ENCODE measurements at regions of chr3 and their contacts with region 1.

Region 1: GRCh38 chr3:167380004-167380689 is at the start of gene ZBBX:
- DNase-seq: peak; percentile 86
- H3K4me3 Mint-ChIP-seq: peak within 1 kb of the TSS; percentile 60
- H3K27ac Mint-ChIP-seq: no peak within 1 kb of the TSS
- H3K4me1 Mint-ChIP-seq: peaks cover 9% of the 10 kb centered on the region
- H3K27me3 Mint-ChIP-seq: peaks cover 7% of the 10 kb centered on the region
- total RNA-seq, gene ZBBX: not detected

Region 2: GRCh38 chr3:167394003-167394402 is 13.9 kb after region 1 on chr3:
- CTCF ChIA-PET with region 1: interaction called, 10 read pairs
- POLR2A ChIA-PET with region 1: no interaction called
- DNase-seq: no peak
- H3K4me3 Mint-ChIP-seq: no peak overlapping the region
- H3K27ac Mint-ChIP-seq: no peak overlapping the region
- H3K4me1 Mint-ChIP-seq: no peaks in the 10 kb centered on the region
- H3K27me3 Mint-ChIP-seq: no peaks in the 10 kb centered on the region

Region 3: GRCh38 chr3:167684388-167684993 is 304.3 kb after region 1 on chr3:
- CTCF ChIA-PET with region 1: interaction called, 22 read pairs
- POLR2A ChIA-PET with region 1: interaction called, 3 read pairs
- DNase-seq: peak; percentile 30
- H3K4me3 Mint-ChIP-seq: no peak overlapping the region
- H3K27ac Mint-ChIP-seq: no peak overlapping the region
- H3K4me1 Mint-ChIP-seq: peaks cover 4% of the 10 kb centered on the region
- H3K27me3 Mint-ChIP-seq: no peaks in the 10 kb centered on the region

Region 4: DNA sequence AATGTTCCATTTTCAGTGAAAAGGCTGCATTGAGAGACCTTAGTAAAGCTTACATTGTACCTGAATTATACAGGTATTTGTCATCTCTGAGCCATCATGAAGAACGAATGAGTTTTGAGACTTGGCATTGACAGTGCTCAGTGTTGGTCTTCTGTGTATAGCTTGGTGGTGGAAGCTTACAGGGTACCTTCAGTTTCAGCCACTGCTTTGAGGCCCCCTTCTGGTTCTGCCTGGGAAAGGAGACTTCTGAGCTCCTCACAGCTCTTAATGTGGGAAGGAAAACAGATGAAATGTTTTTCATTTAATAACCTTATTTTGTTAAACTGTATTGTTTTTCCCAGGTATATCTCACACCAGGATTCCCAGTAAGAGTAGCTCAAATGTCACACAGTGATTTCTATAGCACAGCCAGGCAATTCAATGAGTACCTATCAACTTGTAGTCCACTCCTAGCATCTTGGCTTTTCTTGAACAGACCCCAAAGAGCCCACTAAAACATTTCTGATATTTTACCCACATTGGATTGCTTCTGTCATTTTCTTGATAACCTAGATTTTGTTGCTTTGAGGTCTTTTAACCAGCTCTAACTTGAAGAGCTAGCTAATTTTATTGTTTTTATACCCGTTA is 360.9 kb after region 1 on chr3:
- CTCF ChIA-PET with region 1: interaction called, 20 read pairs
- POLR2A ChIA-PET with region 1: no interaction called
- DNase-seq: peak; percentile 22
- H3K4me3 Mint-ChIP-seq: no peak overlapping the region
- H3K27ac Mint-ChIP-seq: no peak overlapping the region
- H3K4me1 Mint-ChIP-seq: peaks cover 3% of the 10 kb centered on the region
- H3K27me3 Mint-ChIP-seq: no peaks in the 10 kb centered on the region

Region 5: GRCh38 chr3:167882067-167882667 is 502.0 kb after region 1 on chr3:
- CTCF ChIA-PET with region 1: interaction called, 36 read pairs
- POLR2A ChIA-PET with region 1: no interaction called
- DNase-seq: no peak
- H3K4me3 Mint-ChIP-seq: no peak overlapping the region
- H3K27ac Mint-ChIP-seq: no peak overlapping the region
- H3K4me1 Mint-ChIP-seq: peaks cover 2% of the 10 kb centered on the region
- H3K27me3 Mint-ChIP-seq: peaks cover 28% of the 10 kb centered on the region